SK-N-SH (cell line): ENCODE measurements at regions of chr10 and their contacts with region 1.

Region 1: DNA sequence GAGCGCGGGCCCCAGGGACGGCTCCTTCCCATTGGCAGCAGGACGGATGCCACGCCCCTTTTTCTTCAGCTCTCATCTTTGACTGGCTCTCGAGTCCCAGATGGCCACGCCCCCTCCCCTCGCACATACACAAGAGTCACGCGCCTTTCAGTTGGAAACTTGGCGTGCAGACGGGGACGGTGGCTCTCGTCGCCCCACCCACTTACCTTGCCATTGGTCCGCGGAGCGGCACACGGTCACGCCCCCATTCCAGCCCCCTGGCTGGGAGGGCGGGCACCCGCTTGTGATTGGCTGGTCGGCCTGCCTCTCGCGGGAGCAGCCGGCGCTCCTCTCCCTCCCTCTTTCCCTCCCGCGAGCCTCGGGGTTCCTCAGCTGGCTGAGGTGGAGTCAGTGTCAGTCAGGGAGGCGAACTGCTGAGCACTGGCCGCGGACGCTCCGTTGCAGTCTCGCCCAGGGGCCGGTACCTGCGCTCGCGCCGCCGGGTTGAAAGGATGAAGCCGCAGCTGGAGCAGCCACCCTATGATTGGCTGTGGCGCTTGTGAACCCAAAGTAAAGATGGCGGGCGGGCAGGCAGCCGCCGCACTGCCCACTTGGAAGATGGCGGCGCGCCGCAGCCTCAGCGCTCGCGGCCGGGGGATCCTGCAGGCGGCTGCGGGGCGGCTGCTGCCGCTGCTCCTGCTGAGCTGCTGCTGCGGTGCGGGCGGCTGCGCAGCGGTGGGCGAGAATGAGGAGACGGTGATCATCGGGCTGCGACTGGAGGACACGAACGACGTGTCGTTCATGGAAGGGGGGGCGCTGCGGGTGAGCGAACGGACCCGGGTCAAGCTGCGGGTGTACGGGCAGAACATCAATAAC is at the start of gene CNNM2:
- DNase-seq: peak; percentile 98
- H3K4me3 ChIP-seq: peak within 1 kb of the TSS; percentile 97 to 99
- H3K27ac ChIP-seq: peak within 1 kb of the TSS; percentile 76 to 89
- H3K4me1 ChIP-seq: peaks cover 13 to 28% of the 10 kb centered on the region in 2 experiments; a peak in 3 of 4 replicates
- H3K27me3 ChIP-seq: no peaks in the 10 kb centered on the region
- CTCF ChIP-seq: peak; percentile 39
- EP300 ChIP-seq: no peak; a peak in 1 of 4 replicates
- RAD21 ChIP-seq: no peak
- polyA plus RNA-seq, gene CNNM2: 2.2 and 4.0 TPM in 2 replicates

Region 2: GRCh38 chr10:102540023-102540422 is 378.2 kb before region 1 on chr10:
- CTCF ChIA-PET with region 1: no interaction called
- POLR2A ChIA-PET with region 1: no interaction called
- DNase-seq: peak; percentile 39
- H3K4me3 ChIP-seq: no peak overlapping the region; a peak in 1 of 4 replicates
- H3K27ac ChIP-seq: no peak overlapping the region
- H3K4me1 ChIP-seq: 0 out of 4 replicates have a peak, but pooled peaks cover 0 to 4% of the 10 kb centered on the region in 2 experiments
- H3K27me3 ChIP-seq: no peaks in the 10 kb centered on the region
- CTCF ChIP-seq: peak; percentile 56
- EP300 ChIP-seq: no peak
- RAD21 ChIP-seq: no peak

Region 3: DNA sequence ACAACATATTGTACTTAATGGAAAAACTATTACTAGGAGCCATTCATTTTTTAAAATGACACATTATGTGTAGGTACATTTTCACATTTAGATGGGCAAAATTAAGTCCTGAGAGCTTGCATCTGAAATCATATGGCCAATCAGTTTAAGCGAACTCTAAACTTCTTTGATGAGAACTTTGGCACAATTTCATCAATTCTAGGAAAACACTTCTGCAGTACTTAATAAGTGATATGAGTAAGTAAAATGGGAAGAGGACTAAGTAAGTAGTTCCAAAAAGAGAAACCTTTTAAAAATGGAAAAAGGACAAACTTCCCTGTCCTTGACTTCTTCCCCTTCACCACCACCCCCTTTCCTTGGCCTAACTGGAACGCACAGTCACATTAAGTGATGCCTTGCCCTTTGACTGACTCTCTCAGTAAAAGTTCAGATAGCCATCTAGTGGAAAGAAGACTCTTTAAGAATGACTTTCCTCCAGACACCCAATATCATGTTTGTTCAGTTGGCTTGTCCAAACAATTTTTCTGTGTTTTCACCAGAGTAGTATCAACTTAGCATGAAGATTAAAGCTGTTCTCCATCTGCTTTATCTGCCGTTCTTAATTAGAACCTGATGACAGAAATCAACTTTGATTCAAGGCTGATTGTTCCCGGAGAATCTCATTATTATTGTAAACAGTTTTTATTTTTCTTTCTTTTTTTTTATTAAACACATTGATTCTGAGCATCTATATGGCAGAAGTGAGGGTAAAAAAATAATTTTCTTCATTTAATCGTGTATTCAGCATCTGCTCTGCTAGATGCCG is 45.0 kb after region 1 on chr10:
- CTCF ChIA-PET with region 1: interaction called, 15 read pairs
- POLR2A ChIA-PET with region 1: no interaction called
- DNase-seq: peak; percentile 55
- H3K4me3 ChIP-seq: no peak overlapping the region
- H3K27ac ChIP-seq: peak overlapping the region in 1 of 2 experiments; percentile 83; a peak in 3 of 4 replicates
- H3K4me1 ChIP-seq: peaks cover 7 to 17% of the 10 kb centered on the region in 2 experiments; a peak in 2 of 4 replicates
- H3K27me3 ChIP-seq: no peaks in the 10 kb centered on the region
- CTCF ChIP-seq: 0 out of 2 replicates have a peak, but pooled peaks have one; percentile 8
- EP300 ChIP-seq: peak in 1 of 2 experiments; percentile 74; a peak in 2 of 4 replicates
- RAD21 ChIP-seq: peak; percentile 30; the same call in 1 of the 2 replicates

Region 4: DNA sequence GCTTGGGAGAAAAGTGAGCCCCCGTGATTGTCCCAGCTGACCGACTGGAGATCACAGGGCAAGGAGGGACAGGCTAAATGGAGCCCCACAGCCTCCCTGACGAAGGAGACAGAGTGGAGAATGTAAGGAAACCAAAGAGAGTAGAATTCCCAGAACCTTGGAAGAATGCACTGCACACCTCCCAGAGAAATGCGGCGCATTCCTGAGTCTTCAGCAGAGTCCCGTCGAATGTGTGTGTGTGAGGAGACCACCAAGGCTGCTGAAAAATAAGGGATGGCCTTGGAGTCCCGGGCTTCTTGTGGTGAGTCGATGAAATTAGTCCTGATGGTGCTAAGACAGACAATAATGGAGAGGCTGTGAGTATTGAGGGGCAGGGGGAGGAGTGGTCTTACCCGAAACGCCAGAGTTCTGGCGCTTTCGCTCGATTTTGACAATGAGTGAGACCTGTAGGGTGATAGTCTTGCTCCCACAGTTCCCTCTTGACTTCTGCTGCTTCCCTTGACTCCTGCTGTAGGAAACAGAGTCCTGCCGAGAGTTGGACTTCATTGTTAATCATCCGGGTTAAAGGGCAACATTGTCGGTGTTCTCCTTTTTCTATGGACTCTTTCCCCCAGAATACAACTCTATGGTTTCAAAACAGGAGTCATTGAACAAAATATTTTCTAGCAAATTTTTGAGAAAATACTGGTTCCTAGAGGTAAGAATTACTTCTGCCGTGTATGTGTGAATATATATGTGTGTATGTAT is 103.1 kb after region 1 on chr10:
- CTCF ChIA-PET with region 1: no interaction called
- POLR2A ChIA-PET with region 1: no interaction called
- DNase-seq: no peak
- H3K4me3 ChIP-seq: no peak overlapping the region
- H3K27ac ChIP-seq: no peak overlapping the region
- H3K4me1 ChIP-seq: no peaks in the 10 kb centered on the region
- H3K27me3 ChIP-seq: no peaks in the 10 kb centered on the region
- CTCF ChIP-seq: no peak
- EP300 ChIP-seq: no peak
- RAD21 ChIP-seq: no peak

Region 5: GRCh38 chr10:103053659-103054581 is 135.7 kb after region 1 on chr10:
- CTCF ChIA-PET with region 1: interaction called, 43 read pairs
- POLR2A ChIA-PET with region 1: interaction called, 4 read pairs
- DNase-seq: peak; percentile 77
- H3K4me3 ChIP-seq: peak overlapping the region; percentile 43 to 48
- H3K27ac ChIP-seq: peak overlapping the region; percentile 35 to 90; a peak in 3 of 4 replicates
- H3K4me1 ChIP-seq: peaks cover 0 to 14% of the 10 kb centered on the region in 2 experiments; a peak in 2 of 4 replicates
- H3K27me3 ChIP-seq: no peaks in the 10 kb centered on the region
- CTCF ChIP-seq: peak; percentile 55
- EP300 ChIP-seq: no peak
- RAD21 ChIP-seq: peak; percentile 73

Region 6: DNA sequence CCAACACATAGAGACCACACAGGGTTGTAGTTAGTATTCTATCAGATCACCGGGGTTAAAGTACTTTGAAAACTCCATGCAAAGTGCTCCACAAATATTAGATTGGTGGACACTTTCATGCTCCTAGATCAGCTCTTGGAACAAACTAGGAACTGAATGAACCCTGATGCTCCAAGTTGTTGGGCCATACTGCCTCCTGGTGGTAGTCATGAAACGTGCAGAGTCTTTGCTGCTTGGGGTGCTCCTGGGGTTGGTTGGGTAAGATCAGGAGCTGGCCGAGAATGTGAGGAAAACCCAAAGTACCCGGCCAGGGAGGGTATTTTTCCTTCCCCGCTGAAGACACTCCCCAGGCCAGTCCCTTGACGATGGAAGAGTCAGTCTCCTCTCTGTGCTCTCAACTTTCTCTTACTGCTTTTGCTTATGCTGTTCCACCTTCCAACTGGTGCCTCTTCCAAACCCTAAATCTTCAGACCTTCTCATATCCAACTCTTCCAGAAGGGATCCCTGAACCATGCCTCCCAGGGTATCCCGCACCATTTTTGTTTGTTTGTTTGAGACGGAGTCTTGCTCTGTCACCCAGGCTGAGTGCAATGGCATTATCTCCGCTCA is 326.6 kb after region 1 on chr10:
- CTCF ChIA-PET with region 1: interaction called, 12 read pairs
- POLR2A ChIA-PET with region 1: no interaction called
- DNase-seq: peak; percentile 80
- H3K4me3 ChIP-seq: no peak overlapping the region; a peak in 1 of 4 replicates
- H3K27ac ChIP-seq: no peak overlapping the region
- H3K4me1 ChIP-seq: peaks cover 3 to 11% of the 10 kb centered on the region in 2 experiments; a peak in 2 of 4 replicates
- H3K27me3 ChIP-seq: no peaks in the 10 kb centered on the region
- CTCF ChIP-seq: peak; percentile 92
- EP300 ChIP-seq: no peak
- RAD21 ChIP-seq: peak; percentile 87